ENCODE measurements at regions of chr4 and their contacts with region 1.

Region 1: DNA sequence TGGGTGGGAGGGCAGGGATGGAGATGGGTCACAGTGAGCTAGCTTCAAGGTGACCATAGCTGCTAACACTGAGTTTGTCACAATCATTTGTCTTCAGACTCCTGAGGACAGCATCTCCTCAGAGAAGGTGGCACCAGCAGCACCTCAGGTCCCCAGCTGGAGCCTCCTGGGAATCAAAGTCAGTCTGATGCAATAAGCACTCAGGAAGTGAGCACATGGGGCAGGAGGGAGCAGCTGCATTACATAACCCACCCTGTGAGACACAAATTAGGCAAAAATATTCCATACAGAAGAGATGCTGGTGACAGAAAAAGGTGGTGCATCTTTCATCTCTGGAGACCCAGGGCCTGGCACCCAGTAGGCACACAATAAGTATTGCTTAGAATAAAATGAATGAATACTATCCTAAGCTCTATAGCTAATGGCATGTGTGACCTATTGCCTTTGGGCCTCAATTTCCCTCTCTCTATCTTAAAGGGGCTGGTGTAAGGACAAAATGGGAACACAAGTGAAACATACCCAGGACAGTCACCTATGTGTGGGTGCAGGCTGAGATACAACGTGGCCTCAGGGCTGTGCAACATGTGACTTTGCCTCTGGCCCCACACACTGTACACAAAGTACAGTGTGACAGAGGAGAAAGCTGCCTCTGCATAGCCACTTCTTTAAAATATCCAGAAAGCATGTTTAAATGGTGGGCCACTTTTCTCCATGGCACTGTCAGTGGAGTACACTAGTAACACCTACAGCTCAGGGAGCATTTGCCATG is 37.1 kb downstream of the SLC39A8 start:
- DNase-seq: no peak
- H3K4me3 ChIP-seq: no peak overlapping the region
- H3K27ac ChIP-seq: no peak overlapping the region
- H3K4me1 ChIP-seq: no peaks in the 10 kb centered on the region
- H3K27me3 ChIP-seq: no peaks in the 10 kb centered on the region
- CTCF ChIP-seq: no peak
- EP300 ChIP-seq: no peak
- POLR2A ChIP-seq: no peak

Region 2: DNA sequence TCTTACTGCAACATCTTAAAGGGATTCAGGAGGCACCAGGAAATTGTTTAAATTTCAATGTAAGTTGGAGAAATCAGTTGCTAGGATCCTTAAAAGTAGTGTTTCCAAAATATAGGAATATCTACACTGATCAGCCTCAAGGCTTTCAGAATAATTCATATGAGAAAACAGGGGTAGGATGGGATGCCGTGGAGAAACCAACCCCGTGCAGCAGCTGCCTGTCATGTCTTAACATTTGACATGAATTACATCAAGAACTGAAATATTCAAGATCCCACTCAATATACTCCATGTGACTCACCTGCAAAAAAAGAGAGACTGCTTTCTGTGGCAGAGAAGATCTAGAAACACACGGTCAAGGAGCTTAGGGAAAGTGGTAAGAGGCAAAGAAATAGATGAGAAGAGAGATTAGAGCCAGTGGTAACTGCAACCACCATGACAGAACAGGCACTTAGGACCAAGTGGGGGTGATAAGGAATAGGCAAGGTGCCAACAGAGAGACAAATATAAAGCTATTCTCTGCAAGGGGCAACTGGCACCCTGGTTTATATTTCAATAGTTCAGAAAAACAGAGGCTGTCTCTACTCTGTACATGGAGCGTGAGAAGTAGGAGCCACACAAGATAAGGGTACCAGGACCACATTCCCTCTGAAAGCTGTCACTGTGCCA is 26.9 kb before region 1 on chr4:
- in situ Hi-C with region 1: no loop called
- intact Hi-C with region 1: loop called (anchors 1 kb)
- DNase-seq: no peak
- H3K4me3 ChIP-seq: no peak overlapping the region
- H3K27ac ChIP-seq: no peak overlapping the region
- H3K4me1 ChIP-seq: no peaks in the 10 kb centered on the region
- H3K27me3 ChIP-seq: no peaks in the 10 kb centered on the region
- CTCF ChIP-seq: no peak
- EP300 ChIP-seq: no peak
- POLR2A ChIP-seq: no peak